Caco-2 (cell line): ENCODE measurements at regions of chr2 and their contacts with region 1.

Region 1: GRCh38 chr2:10369269-10370255 is 66.9 kb downstream of the HPCAL1 start:
- DNase-seq: peak; percentile 62 to 72
- H3K4me3 ChIP-seq: no peak overlapping the region
- H3K4me3 Mint-ChIP-seq: no peak overlapping the region
- H3K27ac Mint-ChIP-seq: peak overlapping the region; percentile 65
- H3K4me1 ChIP-seq: peaks cover 12% of the 10 kb centered on the region
- H3K4me1 Mint-ChIP-seq: peaks cover 14% of the 10 kb centered on the region
- H3K27me3 ChIP-seq: no peaks in the 10 kb centered on the region
- H3K27me3 Mint-ChIP-seq: no peaks in the 10 kb centered on the region
- CTCF ChIP-seq: no peak

Region 2: GRCh38 chr2:10331027-10331701 is 38.4 kb before region 1 on chr2:
- CTCF ChIA-PET with region 1: interaction called, 3 read pairs
- POLR2A ChIA-PET with region 1: no interaction called
- intact Hi-C with region 1: loop called (anchors 5 kb)
- DNase-seq: no peak
- H3K4me3 ChIP-seq: no peak overlapping the region
- H3K4me3 Mint-ChIP-seq: no peak overlapping the region
- H3K27ac Mint-ChIP-seq: peak overlapping the region; percentile 77
- H3K4me1 ChIP-seq: peaks cover 39% of the 10 kb centered on the region
- H3K4me1 Mint-ChIP-seq: peaks cover 39% of the 10 kb centered on the region
- H3K27me3 ChIP-seq: no peaks in the 10 kb centered on the region
- H3K27me3 Mint-ChIP-seq: no peaks in the 10 kb centered on the region
- CTCF ChIP-seq: no peak